Heart left ventricle (tissue), 16 donors: ENCODE measurements at regions of chr7 and their contacts with region 1.

Region 1: GRCh38 chr7:116525913-116526861 is 1.4 kb downstream of the CAV1 start:
- DNase-seq: peak; percentile 86 to 91 (median 88)
- ATAC-seq: peak; percentile 68 to 88 (median 82)
- H3K4me3 ChIP-seq: peak overlapping the region; percentile 70 to 92 (median 86)
- H3K27ac ChIP-seq: peak overlapping the region; percentile 91 to 99 (median 98)
- H3K4me1 ChIP-seq: peaks cover 5 to 59% (median 43%) of the 10 kb centered on the region in 12 donors
- H3K27me3 ChIP-seq: peaks cover 0 to 24% (median 0%) of the 10 kb centered on the region in 9 donors
- CTCF ChIP-seq: peak; percentile 55 to 99 (median 92)
- POLR2A ChIP-seq: peak in 1 of 2 donors; percentile 71

Region 2: GRCh38 chr7:116271963-116272839 is 254.0 kb before region 1 on chr7:
- intact Hi-C with region 1: loop called in 1 of 10 experiments (anchors 5 kb)
- DNase-seq: peak in 4 of 5 donors; percentile 36 to 66 (median 41)
- ATAC-seq: peak; percentile 93 to 98 (median 96)
- H3K4me3 ChIP-seq: no peak overlapping the region
- H3K27ac ChIP-seq: peak overlapping the region in 11 of 12 donors; percentile 32 to 76 (median 51)
- H3K4me1 ChIP-seq: peaks cover 0 to 30% (median 18%) of the 10 kb centered on the region in 12 donors
- H3K27me3 ChIP-seq: no peaks in the 10 kb centered on the region
- CTCF ChIP-seq: no peak
- POLR2A ChIP-seq: no peak

Region 3: DNA sequence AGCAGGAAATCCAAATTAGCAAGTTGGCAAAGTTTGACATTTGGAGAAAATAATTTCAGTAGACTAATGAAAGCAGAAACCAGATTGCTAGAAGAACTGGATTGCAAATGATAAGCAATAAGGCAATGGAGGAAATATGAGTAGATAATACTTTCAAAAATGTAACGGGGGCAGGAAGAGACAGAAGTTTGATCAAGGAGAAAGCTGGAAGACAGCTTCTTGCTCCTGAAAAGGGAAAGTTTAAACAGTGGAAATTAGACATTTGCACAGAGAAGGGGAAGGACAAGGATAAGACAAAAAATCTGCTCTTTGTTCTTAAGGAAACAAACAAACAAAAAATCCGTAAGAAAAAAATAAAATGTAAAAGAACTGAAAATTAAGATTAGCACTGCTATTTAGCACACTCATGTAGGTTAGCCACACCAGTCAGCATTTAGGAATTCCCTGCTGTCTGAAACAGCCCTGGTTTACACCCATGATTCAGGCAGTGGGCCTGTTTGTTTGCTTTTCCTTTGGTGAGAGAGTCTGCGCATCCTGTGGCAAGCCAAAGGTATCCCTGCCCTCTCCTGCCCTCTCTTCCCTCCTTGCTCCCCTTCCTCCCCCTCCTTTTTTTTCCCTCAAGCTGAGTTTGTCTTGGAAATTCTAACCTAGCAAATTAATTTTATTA is 130.9 kb before region 1 on chr7:
- intact Hi-C with region 1: loop called in 1 of 10 experiments (anchors 2 kb)
- DNase-seq: peak in 1 of 5 donors; percentile 21
- ATAC-seq: peak in 3 of 4 donors; percentile 25 to 60 (median 38)
- H3K4me3 ChIP-seq: no peak overlapping the region
- H3K27ac ChIP-seq: peak overlapping the region in 7 of 12 donors; percentile 2 to 47 (median 18)
- H3K4me1 ChIP-seq: peaks cover 0 to 50% (median 31%) of the 10 kb centered on the region in 12 donors
- H3K27me3 ChIP-seq: no peaks in the 10 kb centered on the region
- CTCF ChIP-seq: no peak
- POLR2A ChIP-seq: no peak

Region 4: DNA sequence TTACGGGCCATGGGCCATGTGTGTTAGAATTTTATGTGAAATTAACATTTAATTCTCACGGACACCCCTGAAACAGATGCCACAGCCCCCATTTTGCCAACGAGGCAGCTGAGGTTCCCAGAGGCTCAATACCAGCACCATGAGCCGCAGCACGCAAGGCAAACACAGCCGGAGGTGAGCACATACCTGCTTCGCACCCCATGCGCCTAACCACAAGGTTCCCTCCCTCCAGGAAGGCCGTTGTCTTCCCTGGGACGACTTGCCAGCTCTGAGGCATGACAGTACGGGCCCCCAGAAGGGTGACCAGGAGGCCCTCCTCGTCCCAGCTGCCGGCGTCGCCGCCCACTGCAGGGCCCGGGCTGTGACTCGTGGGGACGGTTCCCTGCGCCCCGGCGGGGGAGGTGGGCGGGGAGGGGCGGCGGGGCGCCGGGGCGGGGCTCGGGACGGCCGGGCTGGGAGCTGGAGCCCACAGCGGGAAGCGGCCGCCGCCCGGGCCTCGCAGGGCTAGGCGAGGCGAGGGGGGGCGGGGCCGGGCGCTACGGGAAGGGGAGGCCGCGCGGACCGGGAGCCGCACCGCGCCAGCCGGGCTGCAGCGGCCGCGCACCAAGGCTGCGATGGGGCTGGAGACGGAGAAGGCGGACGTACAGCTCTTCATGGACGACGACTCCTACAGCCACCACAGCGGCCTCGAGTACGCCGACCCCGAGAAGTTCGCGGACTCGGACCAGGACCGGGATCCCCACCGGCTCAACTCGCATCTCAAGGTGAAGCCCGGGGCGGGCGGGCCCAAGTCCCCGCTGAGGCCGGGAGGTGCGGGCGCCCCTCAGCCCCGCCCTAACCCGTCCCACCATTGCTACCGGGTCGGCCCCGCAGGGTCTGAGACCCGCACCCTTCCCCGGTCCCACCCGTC is 26.8 kb before region 1 on chr7 and contains the start of gene CAV2:
- intact Hi-C with region 1: loop called in 3 of 10 experiments (anchors 1 to 2 kb)
- DNase-seq: peak; percentile 86 to 88 (median 87)
- ATAC-seq: peak; percentile 79 to 93 (median 86)
- H3K4me3 ChIP-seq: peak within 1 kb of the TSS; percentile 75 to 95 (median 89)
- H3K27ac ChIP-seq: peak within 1 kb of the TSS; percentile 95 to 99 (median 98)
- H3K4me1 ChIP-seq: peaks cover 0 to 42% (median 24%) of the 10 kb centered on the region in 12 donors
- H3K27me3 ChIP-seq: peaks cover 0 to 17% (median 0%) of the 10 kb centered on the region in 9 donors
- CTCF ChIP-seq: no peak
- POLR2A ChIP-seq: peak in 1 of 2 donors; percentile 66
- total RNA-seq, gene CAV2: 189 to 345 (median 237) TPM

Region 5: DNA sequence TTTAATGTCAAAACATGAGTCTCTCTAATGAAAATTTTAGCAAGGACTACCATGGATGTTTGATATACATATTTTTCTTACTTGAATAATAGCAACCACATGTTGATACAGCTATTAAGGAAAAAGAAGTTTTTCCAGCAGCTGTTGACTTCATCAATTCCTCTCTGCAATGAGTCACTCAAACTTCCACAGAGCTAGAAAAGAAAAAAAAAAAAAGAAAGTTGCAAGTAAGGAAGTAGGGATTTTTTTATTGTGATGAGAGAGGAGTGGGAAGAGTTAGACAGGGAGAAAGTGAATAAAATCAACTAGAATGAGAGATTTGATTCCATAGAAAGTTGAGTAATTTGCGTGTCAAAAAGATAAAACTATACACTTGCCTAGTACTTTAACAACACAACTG is 44.9 kb after region 1 on chr7:
- intact Hi-C with region 1: loop called in 1 of 10 experiments (anchors 5 kb)
- DNase-seq: no peak
- ATAC-seq: peak in 2 of 4 donors; percentile 47 to 61
- H3K4me3 ChIP-seq: no peak overlapping the region
- H3K27ac ChIP-seq: peak overlapping the region in 6 of 12 donors; percentile 11 to 61 (median 18)
- H3K4me1 ChIP-seq: peaks cover 0 to 55% (median 30%) of the 10 kb centered on the region in 12 donors
- H3K27me3 ChIP-seq: no peaks in the 10 kb centered on the region
- CTCF ChIP-seq: no peak
- POLR2A ChIP-seq: no peak

Region 6: DNA sequence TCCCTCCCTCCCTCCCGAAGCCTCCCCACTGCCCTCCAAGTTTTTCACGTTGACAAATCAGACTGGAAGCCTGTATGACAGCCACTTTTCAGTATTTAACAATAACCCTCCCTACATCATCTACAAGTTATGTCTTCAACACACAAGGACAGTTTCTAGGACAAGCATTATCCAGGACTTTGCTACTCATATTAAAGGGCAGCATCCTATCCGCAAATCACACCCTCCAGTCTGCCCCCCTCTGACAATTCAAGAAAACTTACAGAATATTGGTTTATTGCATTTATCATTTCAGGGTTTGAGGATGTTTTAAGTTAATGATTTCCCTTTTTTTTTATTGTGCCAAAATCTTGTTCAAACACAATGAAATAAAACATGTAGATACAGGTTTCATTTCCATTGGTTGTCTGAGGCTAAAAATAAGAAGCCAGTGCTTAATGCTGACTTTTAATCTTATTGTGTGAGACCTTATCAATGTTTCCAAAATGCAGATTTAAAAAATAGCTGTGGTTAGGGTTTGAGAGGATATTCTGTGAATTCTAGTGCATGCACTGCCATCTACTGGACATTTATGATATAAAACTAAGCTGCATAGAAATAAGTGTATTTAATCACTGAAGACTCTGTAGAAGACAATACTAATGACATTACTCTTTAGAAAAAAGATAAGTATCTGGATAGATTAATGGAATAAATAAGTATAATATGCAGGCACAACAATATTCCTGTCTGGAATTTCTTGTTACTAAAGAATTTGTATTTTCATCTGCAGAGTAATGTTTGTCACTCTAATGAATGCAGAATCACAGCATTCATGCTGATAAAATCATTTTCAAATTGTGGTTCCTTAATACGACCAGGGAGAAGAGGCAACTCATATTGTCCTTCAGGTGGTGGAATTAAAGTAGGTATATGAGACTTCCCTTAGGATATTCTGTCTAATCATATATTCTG is 62.7 kb after region 1 on chr7:
- intact Hi-C with region 1: loop called in 8 of 10 experiments (anchors 2 to 10 kb)
- DNase-seq: no peak
- ATAC-seq: peak; percentile 29 to 58 (median 50)
- H3K4me3 ChIP-seq: no peak overlapping the region
- H3K27ac ChIP-seq: peak overlapping the region in 9 of 12 donors; percentile 10 to 57 (median 35)
- H3K4me1 ChIP-seq: peaks cover 0 to 43% (median 31%) of the 10 kb centered on the region in 12 donors
- H3K27me3 ChIP-seq: peaks cover 0 to 5% (median 0%) of the 10 kb centered on the region in 9 donors
- CTCF ChIP-seq: peak; percentile 58 to 88 (median 75)
- POLR2A ChIP-seq: no peak

Region 7: DNA sequence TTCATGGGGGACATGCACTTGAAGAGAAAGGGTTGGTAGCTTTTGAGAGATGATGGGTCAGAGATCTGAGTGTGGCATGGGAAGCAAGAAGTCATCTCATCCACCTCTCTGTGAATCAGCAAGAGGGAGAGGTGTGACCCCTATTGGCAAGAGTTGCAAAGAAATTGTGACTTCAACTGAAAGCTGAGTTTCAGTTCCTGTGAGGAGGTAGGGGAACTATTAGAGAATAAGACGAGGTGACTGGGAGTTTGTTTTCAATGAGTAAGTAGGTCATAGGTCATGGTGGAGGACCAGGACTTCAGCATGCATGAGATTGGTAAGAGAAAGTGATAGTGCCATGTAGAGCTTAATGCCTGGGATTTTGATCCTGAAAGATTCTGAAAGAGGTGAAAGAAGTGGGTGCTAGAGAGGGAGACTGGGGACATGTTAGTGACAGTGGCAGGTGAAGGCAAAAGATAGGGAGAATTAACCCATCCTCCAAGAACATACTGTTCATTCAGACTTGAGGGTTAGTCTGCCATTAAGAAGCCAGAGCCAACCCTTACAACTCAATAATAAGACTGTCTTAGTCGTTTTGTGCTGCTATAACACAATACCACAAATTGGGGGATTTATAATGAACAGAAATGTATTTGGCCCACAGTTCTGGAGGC is 260.7 kb after region 1 on chr7:
- intact Hi-C with region 1: no loop called
- DNase-seq: no peak
- ATAC-seq: peak in 1 of 4 donors; percentile 32
- H3K4me3 ChIP-seq: no peak overlapping the region
- H3K27ac ChIP-seq: no peak overlapping the region
- H3K4me1 ChIP-seq: peaks cover 0 to 5% (median 0%) of the 10 kb centered on the region in 12 donors
- H3K27me3 ChIP-seq: no peaks in the 10 kb centered on the region
- CTCF ChIP-seq: peak; percentile 20 to 54 (median 32)
- POLR2A ChIP-seq: no peak